WTC11 (cell line): ENCODE measurements at regions of chr22 and their contacts with region 1.

Region 1: DNA sequence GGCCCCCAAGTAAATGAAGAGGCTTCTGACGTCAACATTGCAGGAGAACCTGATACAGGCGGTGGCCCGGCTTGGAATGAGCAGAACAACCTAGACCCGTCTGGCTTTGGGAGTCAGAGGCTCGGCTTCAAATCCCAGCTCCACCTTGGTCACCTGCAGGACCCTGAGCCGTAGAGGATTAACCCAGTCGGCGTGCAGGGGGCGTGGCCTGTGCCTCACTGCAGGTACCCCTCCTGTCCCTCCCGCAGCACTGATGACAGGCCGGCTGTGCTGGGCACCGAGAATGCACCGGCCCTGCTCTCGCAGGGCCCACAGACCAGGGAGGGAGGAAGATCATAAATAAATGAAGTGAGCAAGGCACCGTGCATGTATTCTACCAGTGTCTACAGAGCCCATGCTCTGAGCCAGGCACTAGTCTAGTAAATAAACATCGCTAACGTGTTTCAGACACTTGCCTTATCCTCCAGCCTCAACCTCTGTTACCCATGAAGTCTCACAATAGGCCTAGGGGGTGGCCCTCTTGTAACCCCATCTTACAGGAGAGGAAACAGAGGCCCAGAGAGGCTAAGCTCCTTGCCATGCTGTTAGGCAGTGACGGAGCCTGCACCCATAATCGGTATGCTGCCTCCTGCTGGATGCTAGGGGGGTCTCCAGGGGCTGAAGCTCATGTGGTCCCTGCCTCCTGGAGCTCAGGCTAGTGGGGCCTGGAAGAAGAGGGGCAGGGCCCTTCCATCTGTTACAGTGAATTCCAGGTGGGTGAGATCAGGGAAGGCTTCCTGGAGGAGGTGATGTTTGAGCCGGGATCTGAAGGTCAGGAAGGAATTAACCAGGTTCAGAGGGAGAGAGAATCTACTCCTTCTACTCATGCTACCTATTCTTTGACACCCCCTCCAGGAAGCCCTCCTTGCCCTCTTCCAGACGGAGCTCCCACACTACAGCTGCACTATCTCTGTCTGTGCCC is 53.4 kb downstream of the RTL6 start:
- DNase-seq: peak; percentile 68
- ATAC-seq: peak; percentile 80
- H3K4me3 Mint-ChIP-seq: no peak overlapping the region
- H3K27ac Mint-ChIP-seq: no peak overlapping the region
- H3K4me1 Mint-ChIP-seq: 0 out of 2 replicates have a peak, but pooled peaks cover 3% of the 10 kb centered on the region
- H3K27me3 Mint-ChIP-seq: no peaks in the 10 kb centered on the region
- CTCF ChIP-seq: 0 out of 2 replicates have a peak, but pooled peaks have one; percentile 39

Region 2: GRCh38 chr22:44298406-44299091 is 146.1 kb before region 1 on chr22:
- CTCF ChIA-PET with region 1: no interaction called
- POLR2A ChIA-PET with region 1: no interaction called
- DNase-seq: no peak
- ATAC-seq: peak; percentile 26; the same call in 1 of the 2 replicates
- H3K4me3 Mint-ChIP-seq: no peak overlapping the region
- H3K27ac Mint-ChIP-seq: no peak overlapping the region
- H3K4me1 Mint-ChIP-seq: no peaks in the 10 kb centered on the region
- H3K27me3 Mint-ChIP-seq: no peaks in the 10 kb centered on the region
- CTCF ChIP-seq: no peak

Region 3: DNA sequence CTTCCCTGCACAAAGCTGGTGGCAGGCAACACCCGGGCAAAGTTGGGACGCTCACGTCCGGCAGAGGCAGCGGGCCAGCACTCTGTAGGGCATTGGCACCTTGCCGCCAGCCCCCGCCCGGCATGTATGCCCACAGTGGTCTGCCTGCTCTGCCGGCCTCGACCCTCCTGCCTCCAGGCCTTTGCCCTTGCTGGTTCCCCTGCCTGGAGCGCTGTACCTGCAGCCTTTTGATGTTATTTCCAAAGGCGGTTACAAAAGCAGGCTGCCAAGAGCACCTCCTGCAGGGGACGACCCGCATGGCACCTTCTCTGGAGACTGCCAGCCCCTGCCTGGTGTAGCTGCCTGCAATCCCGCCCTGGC is 75.3 kb before region 1 on chr22:
- CTCF ChIA-PET with region 1: interaction called, 15 read pairs
- POLR2A ChIA-PET with region 1: no interaction called
- DNase-seq: peak; percentile 77
- ATAC-seq: peak; percentile 87
- H3K4me3 Mint-ChIP-seq: no peak overlapping the region
- H3K27ac Mint-ChIP-seq: no peak overlapping the region
- H3K4me1 Mint-ChIP-seq: no peaks in the 10 kb centered on the region
- H3K27me3 Mint-ChIP-seq: no peaks in the 10 kb centered on the region
- CTCF ChIP-seq: peak; percentile 49

Region 4: GRCh38 chr22:44428941-44429615 is 15.5 kb before region 1 on chr22:
- CTCF ChIA-PET with region 1: interaction called, 16 read pairs
- POLR2A ChIA-PET with region 1: no interaction called
- DNase-seq: no peak
- ATAC-seq: no peak
- H3K4me3 Mint-ChIP-seq: no peak overlapping the region
- H3K27ac Mint-ChIP-seq: no peak overlapping the region
- H3K4me1 Mint-ChIP-seq: peaks cover 13% of the 10 kb centered on the region
- H3K27me3 Mint-ChIP-seq: no peaks in the 10 kb centered on the region
- CTCF ChIP-seq: no peak

Region 5: GRCh38 chr22:44475706-44476105 is 31.1 kb after region 1 on chr22:
- CTCF ChIA-PET with region 1: no interaction called
- POLR2A ChIA-PET with region 1: no interaction called
- DNase-seq: no peak
- ATAC-seq: no peak
- H3K4me3 Mint-ChIP-seq: no peak overlapping the region
- H3K27ac Mint-ChIP-seq: no peak overlapping the region
- H3K4me1 Mint-ChIP-seq: no peaks in the 10 kb centered on the region
- H3K27me3 Mint-ChIP-seq: peaks cover 3% of the 10 kb centered on the region
- CTCF ChIP-seq: no peak

Region 6: DNA sequence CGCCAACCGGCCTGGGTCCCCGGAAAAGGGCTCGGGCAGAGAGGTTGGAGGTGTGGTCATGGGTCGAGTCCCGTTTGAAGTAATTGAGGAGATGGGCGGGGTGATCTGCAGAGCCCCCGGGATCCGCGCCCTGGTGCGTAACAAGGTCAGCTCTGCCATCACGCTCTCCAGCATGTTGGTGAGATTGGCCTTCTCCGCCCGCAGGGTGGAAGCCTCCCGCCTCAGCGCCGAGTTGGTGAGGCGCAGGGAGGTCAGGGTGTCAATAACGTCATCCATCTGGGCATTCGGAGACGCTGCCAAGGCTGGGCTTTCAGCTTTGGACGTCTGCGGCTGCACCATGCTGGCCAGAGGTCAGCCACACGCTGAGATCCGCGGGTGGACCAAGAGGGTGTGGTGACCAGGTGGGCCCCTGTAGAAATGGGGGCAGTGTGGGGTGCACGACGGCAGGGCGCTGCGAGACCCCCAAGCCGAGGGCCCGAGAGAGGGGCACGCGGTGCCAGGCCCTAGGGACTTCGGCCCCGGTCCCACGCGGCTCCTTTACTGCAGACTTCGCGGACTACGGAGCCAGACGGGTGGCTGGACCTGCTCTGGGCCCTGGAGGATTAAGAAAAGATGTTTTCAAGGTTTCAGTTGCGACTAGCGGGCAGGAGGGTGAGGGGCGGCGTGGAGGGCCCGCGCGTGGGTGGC is 52.7 kb after region 1 on chr22:
- CTCF ChIA-PET with region 1: no interaction called
- POLR2A ChIA-PET with region 1: no interaction called
- DNase-seq: peak; percentile 22
- ATAC-seq: peak; percentile 8; the same call in 1 of the 2 replicates
- H3K4me3 Mint-ChIP-seq: peak overlapping the region; percentile 72
- H3K27ac Mint-ChIP-seq: no peak overlapping the region
- H3K4me1 Mint-ChIP-seq: peaks cover 13% of the 10 kb centered on the region
- H3K27me3 Mint-ChIP-seq: peaks cover 10% of the 10 kb centered on the region
- CTCF ChIP-seq: no peak

Region 7: GRCh38 chr22:44576311-44577260 is 132.0 kb after region 1 on chr22:
- CTCF ChIA-PET with region 1: interaction called, 15 read pairs
- POLR2A ChIA-PET with region 1: no interaction called
- DNase-seq: no peak
- ATAC-seq: no peak
- H3K4me3 Mint-ChIP-seq: no peak overlapping the region
- H3K27ac Mint-ChIP-seq: peak overlapping the region; percentile 72; the same call in 1 of the 2 replicates
- H3K4me1 Mint-ChIP-seq: no peaks in the 10 kb centered on the region
- H3K27me3 Mint-ChIP-seq: no peaks in the 10 kb centered on the region; the same call in 1 of the 2 replicates
- CTCF ChIP-seq: no peak

Region 8: GRCh38 chr22:44625981-44626687 is 181.5 kb after region 1 on chr22:
- CTCF ChIA-PET with region 1: interaction called, 17 read pairs
- POLR2A ChIA-PET with region 1: no interaction called
- DNase-seq: peak; percentile 84
- ATAC-seq: peak; percentile 75
- H3K4me3 Mint-ChIP-seq: no peak overlapping the region
- H3K27ac Mint-ChIP-seq: no peak overlapping the region
- H3K4me1 Mint-ChIP-seq: no peaks in the 10 kb centered on the region
- H3K27me3 Mint-ChIP-seq: peaks cover 87% of the 10 kb centered on the region
- CTCF ChIP-seq: peak; percentile 96